ENCODE measurements at regions of chr18 and their contacts with region 1.

Region 1: GRCh38 chr18:48951448-48952286 is 902 bp upstream of the SMAD7 start:
- DNase-seq: peak; percentile 70 to 86 (median 82)
- H3K4me3 ChIP-seq: peak overlapping the region; percentile 67 to 94 (median 84)
- H3K27ac ChIP-seq: peak overlapping the region; percentile 93 to 100 (median 98)
- H3K27me3 ChIP-seq: no peaks in the 10 kb centered on the region
- CTCF ChIP-seq: peak in 27 of 56 donors; percentile 7 to 48 (median 31)

Region 2: DNA sequence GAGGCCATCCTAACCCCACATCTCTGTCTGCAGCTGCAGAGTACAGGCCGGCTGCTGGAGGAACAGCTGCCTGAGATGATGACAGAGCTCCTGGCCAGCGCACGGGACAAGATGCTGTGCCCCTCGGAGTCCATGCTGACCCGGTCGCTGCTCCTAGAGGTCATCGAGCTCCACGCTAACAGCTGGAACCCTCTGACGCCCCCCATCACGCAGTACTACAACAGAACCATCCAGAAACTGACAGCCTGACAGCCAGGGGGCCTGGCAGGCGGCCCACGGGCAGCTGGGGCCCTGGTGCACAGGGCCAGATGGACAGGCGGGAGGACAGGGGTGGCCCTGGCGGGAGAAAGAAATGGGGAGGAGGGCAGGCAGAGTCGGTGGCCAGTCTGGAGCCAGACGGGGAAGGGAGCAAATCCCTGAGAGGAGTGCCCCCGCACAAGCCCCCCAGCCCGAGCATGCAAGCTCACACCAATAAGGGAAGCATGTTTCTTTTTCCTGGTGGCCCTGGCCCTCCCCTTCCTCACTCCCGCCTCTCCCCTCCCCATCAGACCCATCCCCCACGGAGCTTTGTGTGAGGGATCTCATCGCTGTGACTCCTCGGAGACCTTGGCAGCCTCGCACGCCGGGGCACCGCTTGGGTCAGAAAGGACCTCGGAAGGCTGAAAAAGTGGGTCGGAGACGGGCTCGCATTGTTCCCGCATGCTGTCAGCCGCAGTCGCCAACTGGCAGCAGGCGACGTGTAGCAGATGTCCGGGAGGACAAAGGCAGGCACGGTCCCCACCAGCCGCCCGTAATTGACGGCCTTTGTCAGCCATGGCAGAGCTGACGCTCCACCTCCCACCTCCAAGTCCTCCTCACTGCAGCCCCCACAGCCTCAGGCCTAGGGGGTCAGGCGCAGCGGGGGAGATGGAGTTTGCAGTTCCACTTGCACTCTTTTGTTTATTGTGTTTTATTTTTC is 92.1 kb before region 1 on chr18:
- intact Hi-C with region 1: loop called (anchors 1 to 5 kb)
- DNase-seq: peak; percentile 85 to 94 (median 92)
- H3K4me3 ChIP-seq: peak overlapping the region in 33 of 59 donors; percentile 1 to 47 (median 24)
- H3K27ac ChIP-seq: peak overlapping the region; percentile 11 to 98 (median 93)
- H3K27me3 ChIP-seq: no peaks in the 10 kb centered on the region
- CTCF ChIP-seq: peak in 48 of 56 donors; percentile 4 to 64 (median 35)

Region 3: DNA sequence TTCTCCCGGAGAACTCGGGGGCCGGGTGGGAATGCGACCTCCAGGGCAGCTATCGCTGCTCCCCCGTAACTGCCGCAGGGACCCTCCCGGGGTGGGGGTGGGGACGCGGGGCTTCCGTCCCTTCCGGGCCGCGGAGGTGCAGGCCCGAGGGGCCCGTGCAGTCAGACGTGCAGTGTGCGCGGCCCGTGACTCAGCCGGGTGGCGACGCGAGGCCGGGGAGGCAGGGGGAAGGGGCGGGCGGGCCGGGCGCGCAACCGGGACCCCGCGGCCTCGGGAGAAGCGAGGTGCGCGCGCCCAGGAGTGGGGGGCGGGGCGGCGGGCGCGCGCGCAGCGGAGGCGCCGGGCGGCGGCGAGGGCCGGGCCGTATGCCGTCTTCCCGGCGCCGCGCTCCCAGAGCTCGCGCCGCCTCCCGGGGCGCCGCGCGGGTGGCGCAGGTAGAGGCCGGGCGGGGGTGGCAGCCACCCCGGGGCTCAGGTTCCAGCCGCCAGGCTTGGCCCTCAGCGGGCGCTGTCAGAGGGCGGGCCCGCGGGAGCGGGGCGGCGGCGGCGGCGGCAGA is 24.1 kb after region 1 on chr18:
- intact Hi-C with region 1: loop called in 1 of 2 experiments (anchors 1 kb)
- DNase-seq: peak in 3 of 10 donors; percentile 40 to 79 (median 50)
- H3K4me3 ChIP-seq: peak overlapping the region; percentile 46 to 83 (median 69)
- H3K27ac ChIP-seq: peak overlapping the region in 36 of 59 donors; percentile 5 to 83 (median 56)
- H3K27me3 ChIP-seq: no peaks in the 10 kb centered on the region
- CTCF ChIP-seq: no peak

Region 4: DNA sequence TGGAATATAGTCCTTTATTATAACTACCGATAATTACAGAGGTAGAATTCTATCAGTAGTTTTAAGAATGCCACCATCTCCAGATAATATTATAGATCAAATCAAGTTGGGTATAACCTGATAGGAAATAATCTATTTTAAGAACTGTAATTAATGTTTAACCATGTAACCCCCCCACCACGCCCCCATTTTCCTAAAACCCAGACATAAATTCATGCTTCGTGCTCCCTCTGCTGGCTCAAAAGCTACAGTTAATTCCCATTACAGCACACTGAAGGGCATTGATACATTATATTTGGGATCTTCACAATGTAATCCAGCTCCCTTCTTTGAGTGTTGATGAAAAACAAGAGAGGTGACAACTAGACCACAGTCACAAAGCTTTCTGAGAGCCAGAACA is 227.1 kb after region 1 on chr18:
- intact Hi-C with region 1: loop called (anchors 5 kb)
- DNase-seq: peak in 3 of 10 donors; percentile 38 to 56 (median 40)
- H3K4me3 ChIP-seq: no peak overlapping the region
- H3K27ac ChIP-seq: peak overlapping the region in 1 of 59 donors; percentile 39
- H3K27me3 ChIP-seq: no peaks in the 10 kb centered on the region
- CTCF ChIP-seq: peak; percentile 25 to 83 (median 65)

Region 5: GRCh38 chr18:49238433-49239042 is 286.9 kb after region 1 on chr18:
- intact Hi-C with region 1: loop called in 1 of 2 experiments (anchors 10 kb)
- DNase-seq: no peak
- H3K4me3 ChIP-seq: no peak overlapping the region
- H3K27ac ChIP-seq: peak overlapping the region in 7 of 59 donors; percentile 8 to 46 (median 18)
- H3K27me3 ChIP-seq: no peaks in the 10 kb centered on the region
- CTCF ChIP-seq: peak in 55 of 56 donors; percentile 32 to 79 (median 62)

Region 6: DNA sequence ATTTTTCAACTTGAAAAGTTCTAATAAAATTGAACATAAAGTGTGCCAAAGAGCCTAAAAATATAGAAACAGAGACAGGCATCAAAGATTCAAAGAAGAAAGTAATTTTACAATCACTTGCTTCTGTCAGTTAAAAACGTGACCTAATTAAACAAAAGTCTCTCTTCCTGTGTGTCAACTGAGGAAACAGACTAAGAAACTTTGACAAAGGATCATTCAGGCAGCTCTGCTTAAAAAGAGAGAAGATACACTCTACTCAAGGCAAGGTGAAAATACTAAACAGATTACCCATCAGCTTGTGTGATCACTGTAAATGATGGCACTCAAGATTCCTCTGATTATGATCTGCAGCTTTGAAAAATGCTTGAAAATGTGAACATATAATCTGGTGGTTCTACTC is 461.0 kb after region 1 on chr18:
- intact Hi-C with region 1: loop called in 1 of 2 experiments (anchors 10 kb)
- DNase-seq: no peak
- H3K4me3 ChIP-seq: no peak overlapping the region
- H3K27ac ChIP-seq: peak overlapping the region in 20 of 59 donors; percentile 1 to 61 (median 16)
- H3K27me3 ChIP-seq: no peaks in the 10 kb centered on the region
- CTCF ChIP-seq: no peak

Region 7: DNA sequence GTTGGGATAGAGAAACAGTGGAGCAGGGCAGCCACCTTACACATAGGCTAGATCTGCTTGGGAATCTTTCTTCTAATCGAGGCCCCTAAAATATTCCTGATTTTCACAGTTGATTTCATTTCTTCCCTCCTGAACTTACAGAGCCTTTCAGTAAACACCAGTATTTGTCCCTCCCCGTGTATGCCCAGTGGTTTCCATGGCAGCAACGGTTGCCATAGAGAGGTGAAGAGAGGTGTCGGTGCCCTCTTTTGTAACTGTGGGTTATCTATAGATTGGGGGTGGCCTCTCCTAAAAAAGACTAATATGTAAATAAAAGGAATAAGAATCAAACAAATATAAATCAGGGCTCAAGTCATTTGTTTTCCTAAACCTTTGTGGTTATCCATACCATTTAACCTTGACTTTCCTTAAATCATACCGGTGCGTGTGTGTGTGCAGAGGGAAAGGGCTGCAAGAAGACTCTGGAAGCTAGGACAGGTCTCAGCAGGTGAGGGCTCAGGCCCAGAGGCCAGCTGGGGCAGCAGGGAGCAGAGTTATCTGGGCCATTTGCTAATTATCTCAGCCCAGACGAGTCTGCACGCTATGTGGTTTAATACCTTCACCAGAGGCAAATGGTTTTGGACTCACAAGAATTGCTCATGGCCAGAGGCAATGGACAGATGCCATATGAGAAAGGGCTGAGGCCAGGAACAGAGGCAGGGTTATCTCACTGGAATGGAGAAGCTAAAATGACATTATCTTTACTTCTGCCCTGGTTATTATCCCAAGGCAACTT is 645.7 kb after region 1 on chr18:
- intact Hi-C with region 1: no loop called
- DNase-seq: peak in 1 of 10 donors; percentile 76
- H3K4me3 ChIP-seq: no peak overlapping the region
- H3K27ac ChIP-seq: no peak overlapping the region
- H3K27me3 ChIP-seq: peaks cover 0 to 7% (median 0%) of the 10 kb centered on the region in 45 donors
- CTCF ChIP-seq: no peak

Measured in dorsolateral prefrontal cortex (tissue), 120 donors.